ENCODE measurements at regions of chr16 and their contacts with region 1.

Region 1: GRCh38 chr16:4506450-4506849 is 30.3 kb downstream of the HMOX2 start:
- DNase-seq: peak; percentile 73
- H3K4me3 Mint-ChIP-seq: no peak overlapping the region
- H3K27ac Mint-ChIP-seq: peak overlapping the region; percentile 93
- H3K4me1 Mint-ChIP-seq: peaks cover 44% of the 10 kb centered on the region
- H3K27me3 Mint-ChIP-seq: no peaks in the 10 kb centered on the region

Region 2: GRCh38 chr16:4487955-4488498 is 18.4 kb before region 1 on chr16:
- CTCF ChIA-PET with region 1: interaction called, 21 read pairs
- POLR2A ChIA-PET with region 1: no interaction called
- intact Hi-C with region 1: no loop called
- DNase-seq: no peak
- H3K4me3 Mint-ChIP-seq: no peak overlapping the region
- H3K27ac Mint-ChIP-seq: peak overlapping the region; percentile 94
- H3K4me1 Mint-ChIP-seq: peaks cover 54% of the 10 kb centered on the region
- H3K27me3 Mint-ChIP-seq: no peaks in the 10 kb centered on the region

Region 3: DNA sequence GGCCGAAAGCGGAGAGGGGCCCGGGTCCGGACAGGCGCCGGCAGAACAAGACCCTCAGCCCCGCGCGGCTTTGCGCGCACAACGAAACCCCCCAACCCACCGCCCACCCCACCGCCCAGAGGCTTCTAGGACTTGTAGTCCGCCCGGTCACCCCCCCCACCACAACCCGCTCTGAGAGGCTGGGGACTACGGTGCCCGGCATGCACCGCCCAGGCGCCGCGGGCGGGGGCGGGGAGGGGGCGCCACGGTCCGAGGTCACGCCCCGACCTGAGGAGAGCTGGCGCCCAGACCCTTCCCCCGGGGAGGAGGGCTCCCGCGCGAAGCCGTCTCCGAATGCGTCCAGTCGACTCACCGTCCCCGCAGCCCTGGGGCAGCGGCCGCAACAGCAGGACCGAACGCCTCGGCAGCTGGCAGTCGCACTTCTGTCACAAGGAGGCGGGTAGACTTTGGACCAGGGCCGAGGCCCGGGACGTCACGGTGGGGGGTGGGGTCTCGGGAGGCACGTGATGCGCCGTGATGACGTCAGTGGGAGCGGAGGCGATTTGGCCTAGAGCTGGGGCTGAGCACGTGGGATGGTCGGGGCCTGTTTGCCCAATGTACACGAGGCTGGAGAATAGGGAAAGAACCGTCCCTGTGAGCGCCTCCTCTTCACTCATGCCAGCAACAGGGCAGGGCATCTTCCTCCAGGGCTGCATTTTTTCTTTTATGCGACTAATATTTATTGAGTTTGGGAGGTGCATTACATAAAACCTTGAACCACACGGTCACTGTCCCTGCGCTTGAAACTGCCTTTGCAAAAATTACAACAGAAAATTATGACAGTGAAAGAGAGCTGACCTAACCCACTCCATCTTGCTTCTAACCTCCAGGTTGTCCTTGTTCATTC is 32.1 kb after region 1 on chr16 and contains the start of gene CDIP1:
- CTCF ChIA-PET with region 1: interaction called, 25 read pairs
- POLR2A ChIA-PET with region 1: no interaction called
- intact Hi-C with region 1: no loop called
- DNase-seq: peak; percentile 99
- H3K4me3 Mint-ChIP-seq: peak within 1 kb of the TSS; percentile 72
- H3K27ac Mint-ChIP-seq: peak within 1 kb of the TSS; percentile 12
- H3K4me1 Mint-ChIP-seq: peaks cover 33% of the 10 kb centered on the region
- H3K27me3 Mint-ChIP-seq: no peaks in the 10 kb centered on the region
- total RNA-seq, gene CDIP1: 25.7 to 27.5 TPM

Region 4: DNA sequence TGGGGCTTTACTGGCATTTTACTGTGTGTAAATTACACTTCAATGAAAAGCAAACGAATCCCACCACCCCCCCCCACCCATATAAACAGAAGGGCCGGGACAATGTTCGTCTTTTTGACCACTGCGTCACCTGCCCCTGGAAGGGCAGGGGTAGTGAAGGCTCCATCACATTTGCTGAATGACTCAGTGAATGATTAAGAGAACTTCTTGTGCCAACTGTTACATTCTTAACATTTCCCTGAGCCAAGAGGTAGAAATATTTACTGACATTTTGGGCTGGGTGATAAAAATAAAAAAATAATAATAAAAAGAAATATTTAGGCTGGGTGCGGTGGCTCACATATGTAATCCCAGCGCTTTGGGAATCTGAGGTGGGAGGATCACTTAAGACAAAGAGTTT is 73.8 kb after region 1 on chr16:
- CTCF ChIA-PET with region 1: interaction called, 84 read pairs
- POLR2A ChIA-PET with region 1: no interaction called
- intact Hi-C with region 1: loop called (anchors 1 kb)
- DNase-seq: no peak
- H3K4me3 Mint-ChIP-seq: no peak overlapping the region
- H3K27ac Mint-ChIP-seq: no peak overlapping the region
- H3K4me1 Mint-ChIP-seq: no peaks in the 10 kb centered on the region
- H3K27me3 Mint-ChIP-seq: no peaks in the 10 kb centered on the region

Region 5: DNA sequence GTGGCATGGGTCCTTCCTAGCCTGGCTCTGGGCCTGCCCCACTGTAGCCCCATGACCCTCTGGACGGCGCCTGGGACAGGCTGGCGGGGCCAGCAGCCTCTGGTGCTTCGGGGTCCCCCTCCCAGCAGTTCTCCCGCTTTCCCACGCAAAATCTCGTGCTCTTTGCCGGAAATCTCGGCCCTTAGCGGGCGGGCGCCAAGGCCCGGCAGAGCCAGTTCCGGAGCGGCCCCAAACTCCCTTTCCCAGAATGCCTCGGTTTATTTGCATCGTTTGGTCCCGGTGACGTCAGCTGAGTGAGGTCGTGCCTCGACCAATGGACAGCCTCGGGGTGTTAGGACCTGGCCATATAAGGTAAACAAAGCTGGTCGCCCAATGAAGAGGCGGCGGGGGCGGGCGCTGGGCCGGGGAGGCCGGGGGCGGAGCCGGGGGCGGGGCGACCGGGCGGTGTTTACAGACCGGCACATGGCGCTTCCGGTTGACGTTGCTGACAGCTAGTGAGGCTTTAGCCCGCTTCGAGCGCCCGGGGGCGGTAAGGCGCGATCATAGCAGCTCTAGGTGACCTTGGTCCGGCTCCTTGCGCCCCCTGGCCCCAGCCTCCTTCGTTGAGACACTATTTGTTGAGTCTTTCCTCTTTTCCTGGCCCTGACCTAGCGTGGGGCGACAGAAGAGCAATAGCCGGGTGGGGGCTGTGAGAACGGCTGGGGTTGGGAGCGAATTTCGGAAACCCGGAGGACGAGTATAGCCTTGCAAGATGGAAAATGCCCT is 109.8 kb after region 1 on chr16:
- CTCF ChIA-PET with region 1: interaction called, 12 read pairs
- POLR2A ChIA-PET with region 1: no interaction called
- intact Hi-C with region 1: loop called (anchors 2 kb)
- DNase-seq: peak; percentile 100
- H3K4me3 Mint-ChIP-seq: peak overlapping the region; percentile 88
- H3K27ac Mint-ChIP-seq: peak overlapping the region; percentile 95
- H3K4me1 Mint-ChIP-seq: peaks cover 23% of the 10 kb centered on the region
- H3K27me3 Mint-ChIP-seq: no peaks in the 10 kb centered on the region